Heart left ventricle (tissue), 16 donors: ENCODE measurements at regions of chr7 and their contacts with region 1.

Region 1: DNA sequence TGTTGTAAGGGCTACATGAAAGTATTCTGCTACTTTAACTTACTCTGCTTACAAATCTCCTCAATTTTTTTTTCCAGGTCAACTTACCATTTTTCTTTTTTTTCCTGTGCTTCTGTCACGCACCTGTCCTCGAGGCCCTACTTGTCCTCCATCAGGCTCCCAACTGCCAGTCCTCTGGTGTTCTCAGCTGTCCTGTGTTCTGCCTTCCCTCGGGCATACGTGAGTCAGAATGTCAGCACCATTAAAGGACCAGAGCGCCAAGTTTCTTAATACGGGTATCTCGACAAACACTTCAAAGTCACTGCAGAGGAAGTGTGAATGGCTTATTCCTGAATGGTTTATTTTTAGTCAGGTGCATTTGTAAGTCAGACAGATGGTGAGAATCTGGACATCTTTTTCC is at the start of gene TEX47:
- DNase-seq: no peak
- ATAC-seq: no peak
- H3K4me3 ChIP-seq: no peak within 1 kb of the TSS
- H3K27ac ChIP-seq: no peak within 1 kb of the TSS
- H3K4me1 ChIP-seq: no peaks in the 10 kb centered on the region
- H3K27me3 ChIP-seq: no peaks in the 10 kb centered on the region
- CTCF ChIP-seq: no peak
- POLR2A ChIP-seq: no peak
- total RNA-seq, gene TEX47: not detected

Region 2: DNA sequence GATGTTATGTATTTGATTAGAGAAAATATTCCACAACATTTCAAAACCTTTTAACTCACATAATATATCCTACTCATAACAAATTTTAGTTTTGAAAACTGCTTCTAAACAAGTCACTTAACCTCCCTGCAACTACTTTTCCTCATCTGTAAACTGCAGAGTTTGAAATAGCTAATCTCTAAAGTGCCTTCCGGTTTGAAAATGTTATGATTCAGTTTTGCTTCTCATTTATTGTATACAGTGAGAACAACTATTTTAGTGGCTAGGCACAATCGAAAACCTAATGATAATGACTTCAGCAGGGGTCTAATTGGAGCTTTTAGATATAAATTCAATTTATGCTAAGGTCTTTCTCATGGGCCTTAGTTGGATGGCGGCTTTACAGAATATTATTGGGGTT is 30.7 kb after region 1 on chr7:
- intact Hi-C with region 1: loop called in 1 of 10 experiments (anchors 1 kb)
- DNase-seq: no peak
- ATAC-seq: no peak
- H3K4me3 ChIP-seq: no peak overlapping the region
- H3K27ac ChIP-seq: no peak overlapping the region
- H3K4me1 ChIP-seq: no peaks in the 10 kb centered on the region
- H3K27me3 ChIP-seq: no peaks in the 10 kb centered on the region
- CTCF ChIP-seq: no peak
- POLR2A ChIP-seq: no peak